GM12878 (cell line): ENCODE measurements at regions of chr1 and their contacts with region 1.

Region 1: GRCh38 chr1:16366722-16367257 is at the start of gene SZRD1:
- DNase-seq: peak; percentile 100
- ATAC-seq: peak; percentile 89
- H3K4me3 ChIP-seq: peak within 1 kb of the TSS; percentile 91
- H3K27ac ChIP-seq: peak within 1 kb of the TSS; percentile 96
- H3K4me1 ChIP-seq: peaks cover 3% of the 10 kb centered on the region; the same call in 1 of the 2 replicates
- H3K27me3 ChIP-seq: no peaks in the 10 kb centered on the region
- CTCF ChIP-seq: no peak
- EP300 ChIP-seq: no peak
- POLR2A ChIP-seq: no peak
- RAD21 ChIP-seq: no peak
- polyA plus RNA-seq, gene SZRD1: 5.6 to 14.7 TPM

Region 2: GRCh38 chr1:15578921-15579682 is 787.7 kb before region 1 on chr1:
- CTCF ChIA-PET with region 1: no interaction called
- POLR2A ChIA-PET with region 1: no interaction called
- RAD21 ChIA-PET with region 1: no interaction called
- SMC1A ChIA-PET with region 1: no interaction called
- in situ Hi-C with region 1: no loop called
- intact Hi-C with region 1: no loop called
- DNase-seq: peak; percentile 46
- ATAC-seq: peak; percentile 68
- H3K4me3 ChIP-seq: 0 out of 2 replicates have a peak overlapping the region, but pooled peaks have one; percentile 4
- H3K27ac ChIP-seq: peak overlapping the region; percentile 75
- H3K4me1 ChIP-seq: peaks cover 19% of the 10 kb centered on the region
- H3K27me3 ChIP-seq: no peaks in the 10 kb centered on the region
- CTCF ChIP-seq: no peak
- EP300 ChIP-seq: no peak
- POLR2A ChIP-seq: peak; percentile 54; the same call in 1 of the 2 replicates
- RAD21 ChIP-seq: no peak

Region 3: GRCh38 chr1:15847100-15847892 is 519.5 kb before region 1 on chr1 and contains the start of gene SPEN:
- CTCF ChIA-PET with region 1: no interaction called
- POLR2A ChIA-PET with region 1: no interaction called
- RAD21 ChIA-PET with region 1: no interaction called
- SMC1A ChIA-PET with region 1: no interaction called
- in situ Hi-C with region 1: no loop called
- intact Hi-C with region 1: loop called (anchors 5 kb)
- DNase-seq: peak; percentile 82
- ATAC-seq: peak; percentile 80
- H3K4me3 ChIP-seq: peak within 1 kb of the TSS; percentile 94
- H3K27ac ChIP-seq: peak within 1 kb of the TSS; percentile 87
- H3K4me1 ChIP-seq: peaks cover 4% of the 10 kb centered on the region
- H3K27me3 ChIP-seq: no peaks in the 10 kb centered on the region
- CTCF ChIP-seq: 0 out of 6 replicates have a peak, but pooled peaks of 1 of the 3 experiments have one; percentile 4
- EP300 ChIP-seq: no peak
- POLR2A ChIP-seq: peak; percentile 83
- RAD21 ChIP-seq: no peak
- polyA plus RNA-seq, gene SPEN: 5.2 to 12.9 TPM

Region 4: GRCh38 chr1:16009030-16009709 is 357.6 kb before region 1 on chr1:
- CTCF ChIA-PET with region 1: no interaction called
- POLR2A ChIA-PET with region 1: no interaction called
- RAD21 ChIA-PET with region 1: no interaction called
- SMC1A ChIA-PET with region 1: no interaction called
- in situ Hi-C with region 1: no loop called
- intact Hi-C with region 1: no loop called
- DNase-seq: no peak
- ATAC-seq: peak; percentile 55
- H3K4me3 ChIP-seq: no peak overlapping the region
- H3K27ac ChIP-seq: no peak overlapping the region
- H3K4me1 ChIP-seq: peaks cover 35% of the 10 kb centered on the region
- H3K27me3 ChIP-seq: no peaks in the 10 kb centered on the region; a peak in 1 of 4 replicates
- CTCF ChIP-seq: peak; percentile 93 to 97 (median 93)
- EP300 ChIP-seq: no peak
- POLR2A ChIP-seq: no peak
- RAD21 ChIP-seq: peak; percentile 94

Region 5: DNA sequence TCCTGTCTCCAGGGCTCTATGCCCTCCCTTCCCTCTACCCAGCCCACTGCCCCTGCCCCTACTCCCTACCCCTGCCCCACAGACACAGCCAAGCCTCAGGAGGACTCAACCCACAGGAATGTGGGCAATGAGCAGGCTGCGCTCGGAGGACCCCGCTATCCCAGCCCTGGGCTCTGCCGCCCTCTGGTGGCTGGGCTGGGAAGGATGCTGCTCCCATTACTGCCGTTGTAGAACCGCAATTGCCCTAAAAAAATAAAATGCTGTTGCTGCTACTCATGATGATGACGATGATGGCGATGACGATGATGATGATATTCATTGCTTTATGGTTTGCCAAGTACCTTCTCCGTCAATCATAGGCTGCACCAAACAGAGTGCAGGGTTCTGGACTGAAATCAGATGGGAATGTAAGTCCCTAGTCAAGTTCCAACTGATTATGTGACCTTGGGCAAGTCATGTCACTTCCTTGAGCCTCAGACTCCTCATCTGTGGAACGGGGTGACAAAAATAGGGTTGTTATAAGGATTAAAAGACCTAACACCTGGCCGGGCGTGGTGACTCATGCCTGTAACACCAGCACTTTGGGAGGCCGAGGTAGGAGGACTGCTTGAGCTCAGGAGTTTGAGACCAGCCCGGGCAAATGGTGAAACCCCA is 178.9 kb before region 1 on chr1:
- CTCF ChIA-PET with region 1: interaction called, 16 read pairs
- POLR2A ChIA-PET with region 1: interaction called, 3 read pairs
- RAD21 ChIA-PET with region 1: interaction called, 10 read pairs
- SMC1A ChIA-PET with region 1: interaction called, 16 read pairs
- in situ Hi-C with region 1: no loop called
- intact Hi-C with region 1: no loop called
- DNase-seq: no peak
- ATAC-seq: peak; percentile 93
- H3K4me3 ChIP-seq: no peak overlapping the region
- H3K27ac ChIP-seq: no peak overlapping the region
- H3K4me1 ChIP-seq: no peaks in the 10 kb centered on the region
- H3K27me3 ChIP-seq: no peaks in the 10 kb centered on the region
- CTCF ChIP-seq: peak; percentile 91 to 96 (median 94)
- EP300 ChIP-seq: no peak
- POLR2A ChIP-seq: no peak
- RAD21 ChIP-seq: peak; percentile 98

Region 6: GRCh38 chr1:16236511-16237342 is 130.1 kb before region 1 on chr1 and contains the start of gene CPLANE2:
- CTCF ChIA-PET with region 1: interaction called, 27 read pairs
- POLR2A ChIA-PET with region 1: interaction called, 4 read pairs
- RAD21 ChIA-PET with region 1: interaction called, 10 read pairs
- SMC1A ChIA-PET with region 1: interaction called, 3 read pairs
- in situ Hi-C with region 1: no loop called
- intact Hi-C with region 1: loop called (anchors 5 kb)
- DNase-seq: peak; percentile 76
- ATAC-seq: peak; percentile 93
- H3K4me3 ChIP-seq: peak within 1 kb of the TSS; percentile 68
- H3K27ac ChIP-seq: peak within 1 kb of the TSS; percentile 84
- H3K4me1 ChIP-seq: peaks cover 17% of the 10 kb centered on the region
- H3K27me3 ChIP-seq: no peaks in the 10 kb centered on the region
- CTCF ChIP-seq: peak in 1 of 3 experiments; percentile 1; a peak in 1 of 6 replicates
- EP300 ChIP-seq: no peak
- POLR2A ChIP-seq: peak; percentile 67; the same call in 1 of the 2 replicates
- RAD21 ChIP-seq: no peak
- polyA plus RNA-seq, gene CPLANE2: 0.09 TPM in 1 of 2 experiments, not detected in the other

Region 7: GRCh38 chr1:16351994-16352841 is 14.6 kb before region 1 on chr1 and contains the start of gene FBXO42:
- CTCF ChIA-PET with region 1: interaction called, 85 read pairs
- POLR2A ChIA-PET with region 1: interaction called, 21 read pairs
- RAD21 ChIA-PET with region 1: interaction called, 31 read pairs
- SMC1A ChIA-PET with region 1: interaction called, 43 read pairs
- in situ Hi-C with region 1: no loop called
- intact Hi-C with region 1: no loop called
- DNase-seq: peak; percentile 73
- ATAC-seq: peak; percentile 93
- H3K4me3 ChIP-seq: peak within 1 kb of the TSS; percentile 93
- H3K27ac ChIP-seq: peak within 1 kb of the TSS; percentile 84
- H3K4me1 ChIP-seq: 0 out of 2 replicates have a peak, but pooled peaks cover 4% of the 10 kb centered on the region
- H3K27me3 ChIP-seq: no peaks in the 10 kb centered on the region
- CTCF ChIP-seq: peak; percentile 33 to 52 (median 41)
- EP300 ChIP-seq: no peak
- POLR2A ChIP-seq: peak; percentile 98
- RAD21 ChIP-seq: no peak
- polyA plus RNA-seq, gene FBXO42: 6.1 to 6.2 TPM

Region 8: GRCh38 chr1:16386454-16387113 is 19.8 kb after region 1 on chr1:
- CTCF ChIA-PET with region 1: interaction called, 30 read pairs
- POLR2A ChIA-PET with region 1: interaction called, 34 read pairs
- RAD21 ChIA-PET with region 1: interaction called, 37 read pairs
- SMC1A ChIA-PET with region 1: interaction called, 37 read pairs
- in situ Hi-C with region 1: no loop called
- intact Hi-C with region 1: loop called (anchors 1 kb)
- DNase-seq: no peak
- ATAC-seq: peak; percentile 57
- H3K4me3 ChIP-seq: peak overlapping the region; percentile 44
- H3K27ac ChIP-seq: peak overlapping the region; percentile 77
- H3K4me1 ChIP-seq: peaks cover 37% of the 10 kb centered on the region
- H3K27me3 ChIP-seq: no peaks in the 10 kb centered on the region
- CTCF ChIP-seq: no peak
- EP300 ChIP-seq: no peak
- POLR2A ChIP-seq: no peak
- RAD21 ChIP-seq: no peak

Region 9: DNA sequence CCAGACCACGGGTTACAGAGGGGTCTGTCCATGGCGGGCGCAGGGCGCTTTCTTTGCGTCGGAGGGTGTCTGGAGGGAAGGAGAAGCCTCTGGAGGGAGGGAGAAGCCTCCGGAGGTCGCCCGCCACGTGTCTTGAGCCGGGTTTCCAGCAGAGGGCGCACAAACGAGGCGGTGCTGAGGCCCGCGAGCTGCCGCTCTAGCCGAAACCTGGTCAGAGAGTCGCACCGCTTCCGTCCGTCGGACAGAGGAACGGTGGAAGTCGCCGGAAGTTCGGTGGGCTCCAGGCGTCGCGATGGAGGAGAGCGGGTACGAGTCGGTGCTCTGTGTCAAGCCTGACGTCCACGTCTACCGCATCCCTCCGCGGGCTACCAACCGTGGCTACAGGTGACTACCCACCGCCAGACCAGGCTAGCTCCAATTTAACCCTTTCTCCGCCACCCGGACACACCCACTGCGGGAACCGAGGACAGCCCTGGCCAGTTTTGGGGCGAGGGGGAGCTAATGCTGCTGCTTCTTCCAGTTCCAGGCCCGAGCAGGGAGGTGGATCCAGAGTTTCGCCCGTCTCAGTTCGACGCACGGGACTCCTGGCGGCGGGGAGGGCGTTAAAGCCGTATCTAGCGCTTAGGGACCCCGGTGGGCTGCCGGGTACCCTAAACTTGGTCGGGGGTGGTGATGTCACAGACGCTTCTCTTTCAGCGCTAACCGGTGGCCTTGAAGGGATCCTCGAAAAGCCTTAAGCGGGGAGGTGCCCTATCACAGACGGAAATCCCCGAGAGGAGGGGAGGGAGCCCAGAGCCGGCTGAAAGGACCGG is 73.9 kb after region 1 on chr1 and contains the start of gene NECAP2:
- CTCF ChIA-PET with region 1: interaction called, 6 read pairs
- POLR2A ChIA-PET with region 1: interaction called, 8 read pairs
- RAD21 ChIA-PET with region 1: interaction called, 3 read pairs
- SMC1A ChIA-PET with region 1: interaction called, 10 read pairs
- in situ Hi-C with region 1: no loop called
- intact Hi-C with region 1: loop called (anchors 2 kb)
- DNase-seq: peak; percentile 75
- ATAC-seq: peak; percentile 93
- H3K4me3 ChIP-seq: peak within 1 kb of the TSS; percentile 90
- H3K27ac ChIP-seq: peak within 1 kb of the TSS; percentile 89
- H3K4me1 ChIP-seq: peaks cover 18% of the 10 kb centered on the region; the same call in 1 of the 2 replicates
- H3K27me3 ChIP-seq: no peaks in the 10 kb centered on the region
- CTCF ChIP-seq: peak; percentile 90 to 97 (median 91); a peak in 5 of 6 replicates
- EP300 ChIP-seq: no peak
- POLR2A ChIP-seq: peak; percentile 99
- RAD21 ChIP-seq: peak; percentile 40; the same call in 1 of the 2 replicates
- polyA plus RNA-seq, gene NECAP2: 16.3 to 21.1 TPM